Activated CD4-positive, alpha-beta T cell treated with anti-CD3 and anti-CD28 coated beads for 36 hours (primary cell): ENCODE measurements at regions of chr15 and their contacts with region 1.

Region 1: DNA sequence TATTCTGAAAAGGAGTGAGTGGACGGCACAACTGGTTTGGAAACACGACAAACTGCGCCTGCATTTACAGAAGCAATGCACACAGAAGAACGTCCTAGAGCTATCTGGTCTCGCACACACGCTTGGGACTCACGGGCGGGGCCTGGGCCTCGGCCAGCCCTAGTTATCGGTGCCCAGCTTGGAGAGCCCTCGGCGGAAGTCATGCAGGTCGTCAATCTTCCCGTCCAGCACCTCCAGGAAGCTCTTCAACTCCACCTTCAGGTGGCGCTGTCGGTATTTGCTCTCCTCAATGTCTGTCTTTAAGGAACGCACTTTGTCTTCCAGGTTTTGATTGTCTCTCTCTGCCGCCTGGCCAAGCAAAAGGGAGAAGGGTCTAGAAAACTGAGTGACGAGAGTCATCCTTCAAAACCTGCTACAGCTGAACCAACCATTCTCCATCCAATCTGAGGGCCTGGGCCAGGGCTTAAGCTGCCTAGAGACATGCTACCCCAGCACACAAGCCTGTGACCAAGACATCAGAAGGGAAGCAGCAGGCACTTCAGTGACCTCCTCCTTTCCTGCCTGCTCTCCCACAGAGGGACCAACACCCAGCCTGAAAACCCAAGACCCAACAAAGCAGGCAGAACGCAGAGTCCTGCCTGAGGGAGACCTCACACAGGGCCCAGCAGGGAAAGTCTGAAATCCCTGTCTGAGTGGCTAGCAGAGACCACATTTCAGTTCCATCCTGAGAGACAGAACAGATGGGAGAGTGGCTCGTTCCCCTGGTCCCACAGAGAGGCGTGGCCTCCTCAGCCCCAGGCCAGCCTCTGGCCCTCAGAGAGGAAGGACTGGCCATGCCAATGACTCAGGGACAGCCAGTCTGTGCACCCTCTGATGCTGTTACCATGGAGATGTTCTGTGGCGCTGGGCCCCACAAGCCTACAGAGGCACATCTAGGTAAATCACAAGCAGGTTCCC is 40.4 kb downstream of the WHAMM start:
- DNase-seq: peak; percentile 80
- ATAC-seq: peak; percentile 75
- H3K4me3 Mint-ChIP-seq: no peak overlapping the region
- H3K27ac Mint-ChIP-seq: no peak overlapping the region
- H3K4me1 Mint-ChIP-seq: peaks cover 18% of the 10 kb centered on the region
- H3K27me3 Mint-ChIP-seq: peaks cover 2% of the 10 kb centered on the region

Region 2: GRCh38 chr15:82952158-82953081 is 102.6 kb after region 1 on chr15 and contains the start of gene HOMER2:
- CTCF ChIA-PET with region 1: no interaction called
- POLR2A ChIA-PET with region 1: no interaction called
- intact Hi-C with region 1: loop called in 1 of 2 experiments (anchors 5 kb)
- DNase-seq: peak; percentile 35
- ATAC-seq: peak; percentile 57
- H3K4me3 Mint-ChIP-seq: peak within 1 kb of the TSS; percentile 67
- H3K27ac Mint-ChIP-seq: peak within 1 kb of the TSS; percentile 65
- H3K4me1 Mint-ChIP-seq: peaks cover 2% of the 10 kb centered on the region
- H3K27me3 Mint-ChIP-seq: peaks cover 9% of the 10 kb centered on the region
- total RNA-seq, gene HOMER2: 3.5 to 4.6 TPM

Region 3: GRCh38 chr15:82999905-83000671 is 150.3 kb after region 1 on chr15:
- CTCF ChIA-PET with region 1: interaction called, 18 read pairs
- POLR2A ChIA-PET with region 1: no interaction called
- intact Hi-C with region 1: loop called (anchors 1 kb)
- DNase-seq: peak; percentile 41
- ATAC-seq: peak; percentile 89
- H3K4me3 Mint-ChIP-seq: peak overlapping the region; percentile 53
- H3K27ac Mint-ChIP-seq: peak overlapping the region; percentile 63
- H3K4me1 Mint-ChIP-seq: peaks cover 6% of the 10 kb centered on the region
- H3K27me3 Mint-ChIP-seq: no peaks in the 10 kb centered on the region

Region 4: DNA sequence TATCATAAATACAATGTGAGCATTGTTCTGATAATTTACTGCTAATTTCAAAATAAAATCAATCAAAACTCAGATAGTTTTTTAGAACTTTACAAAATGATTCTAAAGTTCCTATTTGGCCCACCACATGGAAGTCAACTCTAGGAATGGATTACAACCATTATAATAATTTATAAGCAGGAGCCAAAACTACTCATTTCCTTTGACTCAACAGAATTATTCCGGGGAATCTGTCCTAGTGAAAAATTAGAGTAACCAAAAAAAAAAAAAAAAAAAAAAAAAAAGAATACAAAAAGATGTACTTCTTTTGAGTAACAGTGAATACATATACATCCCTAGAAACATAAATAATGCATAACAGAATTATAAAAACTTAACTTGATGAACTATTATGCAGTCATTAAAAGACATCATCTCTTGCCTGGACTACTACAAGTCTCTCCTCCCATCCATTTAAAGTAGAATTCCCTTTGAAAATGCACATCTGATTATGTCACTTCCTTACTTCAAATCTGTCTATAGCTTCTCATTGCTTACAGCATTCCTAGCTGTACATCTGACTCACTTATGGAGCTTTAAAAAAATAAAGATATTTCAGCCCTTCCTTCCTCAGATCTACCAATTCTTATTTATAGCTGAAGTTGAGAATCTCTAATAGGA is 314.4 kb after region 1 on chr15:
- CTCF ChIA-PET with region 1: no interaction called
- POLR2A ChIA-PET with region 1: no interaction called
- intact Hi-C with region 1: loop called in 1 of 2 experiments (anchors 5 kb)
- DNase-seq: no peak
- ATAC-seq: no peak
- H3K4me3 Mint-ChIP-seq: no peak overlapping the region
- H3K27ac Mint-ChIP-seq: peak overlapping the region; percentile 34
- H3K4me1 Mint-ChIP-seq: peaks cover 19% of the 10 kb centered on the region
- H3K27me3 Mint-ChIP-seq: peaks cover 27% of the 10 kb centered on the region

Region 5: DNA sequence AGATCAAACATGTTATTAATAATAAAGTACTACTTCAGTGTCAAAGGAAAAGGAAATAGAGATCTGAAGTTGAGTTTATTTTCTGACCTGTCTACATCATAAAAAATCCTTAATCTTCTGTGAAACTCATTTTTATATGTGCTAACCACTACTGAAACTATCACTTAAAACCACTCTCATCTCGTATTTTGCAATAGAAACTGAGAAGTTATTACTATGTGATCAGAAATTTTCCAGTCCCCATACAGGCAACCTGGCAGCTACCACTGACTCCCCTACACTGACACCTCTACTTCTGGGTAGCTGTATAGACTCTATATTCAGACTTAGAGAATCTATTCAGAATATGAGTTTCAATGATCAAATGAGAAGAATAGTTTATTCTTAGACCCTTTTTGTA is 349.5 kb after region 1 on chr15:
- CTCF ChIA-PET with region 1: no interaction called
- POLR2A ChIA-PET with region 1: no interaction called
- intact Hi-C with region 1: no loop called
- DNase-seq: peak; percentile 37
- ATAC-seq: peak; percentile 91
- H3K4me3 Mint-ChIP-seq: no peak overlapping the region
- H3K27ac Mint-ChIP-seq: no peak overlapping the region
- H3K4me1 Mint-ChIP-seq: peaks cover 20% of the 10 kb centered on the region
- H3K27me3 Mint-ChIP-seq: peaks cover 17% of the 10 kb centered on the region